ENCODE measurements at regions of chr13 and their contacts with region 1.

Region 1: GRCh38 chr13:60396783-60397703 is at the start of gene TDRD3:
- DNase-seq: peak; percentile 84
- ATAC-seq: peak; percentile 83 to 95 (median 89)
- H3K4me3 ChIP-seq: peak within 1 kb of the TSS; percentile 42 to 78 (median 76)
- H3K27ac ChIP-seq: peak within 1 kb of the TSS; percentile 88 to 99 (median 98)
- H3K4me1 ChIP-seq: peaks cover 2 to 35% (median 25%) of the 10 kb centered on the region in 9 donors
- H3K27me3 ChIP-seq: no peaks in the 10 kb centered on the region
- CTCF ChIP-seq: peak; percentile 66 to 94 (median 74)
- total RNA-seq, gene TDRD3: 38.1 to 60.7 (median 51.6) TPM

Region 2: GRCh38 chr13:59345316-59345715 is 1051.7 kb before region 1 on chr13:
- intact Hi-C with region 1: loop called in 1 of 10 experiments (anchors 10 kb)
- DNase-seq: peak; percentile 68 to 93
- ATAC-seq: peak; percentile 72 to 98 (median 91)
- H3K4me3 ChIP-seq: no peak overlapping the region
- H3K27ac ChIP-seq: peak overlapping the region in 9 of 10 donors; percentile 46 to 83 (median 67)
- H3K4me1 ChIP-seq: peaks cover 3 to 80% (median 33%) of the 10 kb centered on the region in 9 donors
- H3K27me3 ChIP-seq: no peaks in the 10 kb centered on the region
- CTCF ChIP-seq: no peak

Region 3: GRCh38 chr13:60163478-60164233 is 233.4 kb before region 1 on chr13 and contains the start of gene DIAPH3:
- intact Hi-C with region 1: loop called in 4 of 10 experiments (anchors 5 to 10 kb)
- DNase-seq: peak; percentile 96 to 97
- ATAC-seq: peak; percentile 100
- H3K4me3 ChIP-seq: peak within 1 kb of the TSS; percentile 47 to 85 (median 67)
- H3K27ac ChIP-seq: peak within 1 kb of the TSS; percentile 55 to 95 (median 91)
- H3K4me1 ChIP-seq: peaks cover 3 to 25% (median 20%) of the 10 kb centered on the region in 9 donors
- H3K27me3 ChIP-seq: no peaks in the 10 kb centered on the region
- CTCF ChIP-seq: peak in 1 of 9 donors; percentile 24
- total RNA-seq, gene DIAPH3: 0.07 to 2.2 (median 0.23) TPM